OCI-LY7 (cell line): ENCODE measurements at regions of chr5 and their contacts with region 1.

Region 1: DNA sequence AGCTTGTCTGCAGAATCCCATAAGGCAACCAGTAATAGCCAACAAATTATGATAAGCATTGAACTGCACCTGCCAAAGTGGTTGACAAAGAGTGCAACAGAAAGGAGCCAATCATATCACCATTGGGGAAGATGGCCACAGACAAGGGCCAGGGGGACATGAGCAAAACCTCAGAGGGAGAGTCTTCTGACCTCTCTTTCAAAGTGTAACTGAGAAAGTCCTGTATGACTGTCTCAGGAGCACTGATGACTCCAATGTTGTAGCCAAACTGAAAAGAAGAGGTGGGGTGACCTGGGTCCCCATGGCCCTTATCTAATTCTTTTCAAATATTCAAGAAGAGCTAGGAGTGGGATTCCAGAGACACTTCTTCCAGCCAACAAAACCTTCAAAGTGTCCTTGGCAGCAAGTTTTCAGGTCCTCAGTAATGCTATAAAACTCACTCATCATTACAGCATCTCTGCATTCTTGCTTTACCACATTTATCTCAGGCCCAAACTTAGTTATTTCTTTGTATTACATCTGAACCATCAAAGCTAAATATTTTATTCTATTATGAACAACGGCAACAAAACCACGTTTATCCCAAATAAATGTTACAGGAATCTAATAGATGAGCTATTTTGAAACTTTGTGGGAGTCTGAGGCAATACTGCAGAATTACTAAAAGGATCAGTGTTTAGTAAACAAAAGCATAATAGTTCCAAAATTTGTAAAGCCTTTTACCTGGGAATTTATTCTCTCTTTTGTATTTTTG is 24.4 kb downstream of the FBLL1 start:
- DNase-seq: no peak
- H3K4me3 ChIP-seq: no peak overlapping the region
- H3K27ac ChIP-seq: no peak overlapping the region
- H3K4me1 ChIP-seq: no peaks in the 10 kb centered on the region
- CTCF ChIP-seq: no peak

Region 2: GRCh38 chr5:168513861-168514428 is 39.6 kb before region 1 on chr5:
- CTCF ChIA-PET with region 1: no interaction called
- POLR2A ChIA-PET with region 1: no interaction called
- intact Hi-C with region 1: loop called (anchors 2 kb)
- DNase-seq: no peak
- H3K4me3 ChIP-seq: no peak overlapping the region
- H3K27ac ChIP-seq: no peak overlapping the region
- H3K4me1 ChIP-seq: no peaks in the 10 kb centered on the region
- CTCF ChIP-seq: no peak

Region 3: DNA sequence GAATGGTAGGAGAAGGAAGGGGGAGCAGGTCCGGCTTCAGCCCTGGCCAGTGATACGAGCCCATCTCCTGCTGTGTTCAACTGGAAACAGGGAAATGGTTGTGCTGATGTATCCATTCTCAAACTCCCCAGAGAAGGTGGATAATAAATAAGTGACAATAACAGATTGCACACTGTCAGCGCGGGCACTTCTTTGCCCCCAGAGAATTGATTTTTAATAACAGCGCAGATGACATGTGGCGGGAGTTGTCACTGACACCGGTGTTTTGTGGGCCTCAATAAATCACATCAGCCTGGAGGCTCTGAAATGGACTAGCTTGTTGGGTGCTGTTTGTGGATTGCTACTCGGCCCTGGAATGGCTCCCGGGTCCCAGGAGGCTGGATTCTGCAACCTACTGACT is 167.0 kb after region 1 on chr5:
- CTCF ChIA-PET with region 1: no interaction called
- POLR2A ChIA-PET with region 1: no interaction called
- intact Hi-C with region 1: no loop called
- DNase-seq: no peak
- H3K4me3 ChIP-seq: no peak overlapping the region
- H3K27ac ChIP-seq: no peak overlapping the region
- H3K4me1 ChIP-seq: no peaks in the 10 kb centered on the region
- CTCF ChIP-seq: no peak